ENCODE measurements at regions of chr1 and their contacts with region 1.

Region 1: DNA sequence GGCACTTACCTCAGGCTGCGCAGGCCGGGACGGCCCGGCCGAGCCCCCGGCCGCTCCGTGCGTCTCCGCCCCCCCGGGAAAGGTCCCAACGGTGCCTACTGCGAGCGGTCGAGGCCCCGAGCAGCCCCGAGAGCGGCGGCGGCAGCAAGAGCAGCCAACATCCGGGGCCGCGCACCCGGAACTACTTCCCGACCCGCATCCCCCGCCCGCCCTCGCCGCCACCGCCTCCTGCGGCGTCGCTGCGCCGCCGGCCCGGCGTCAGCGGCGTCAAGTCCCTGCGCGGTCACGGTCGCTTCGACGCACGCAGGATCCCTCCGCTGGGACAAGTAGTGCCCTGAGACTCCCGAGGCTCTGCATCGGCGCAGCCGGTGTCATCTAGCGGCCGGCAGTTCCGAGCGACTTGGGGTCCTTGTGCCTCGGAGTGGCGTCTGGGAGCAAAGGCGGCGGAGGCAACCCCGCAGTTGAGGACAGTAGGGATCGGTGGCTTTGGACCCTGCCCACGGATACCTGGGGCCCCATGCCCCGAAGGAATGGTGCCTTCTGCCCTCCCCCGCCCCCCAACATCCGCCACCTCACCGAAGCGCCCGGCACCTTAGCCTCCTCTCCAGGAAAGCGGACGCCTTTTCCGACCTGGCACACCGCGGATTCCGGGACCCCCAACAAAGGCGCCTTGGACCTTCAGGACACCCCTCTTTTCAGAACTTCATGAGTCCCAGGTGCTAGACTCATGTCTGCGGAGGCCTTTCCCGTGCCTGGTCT is at the start of gene FOXJ3:
- DNase-seq: peak; percentile 84 to 94
- H3K4me3 ChIP-seq: peak within 1 kb of the TSS; percentile 85
- H3K27ac ChIP-seq: peak within 1 kb of the TSS; percentile 84
- H3K4me1 ChIP-seq: peaks cover 58% of the 10 kb centered on the region
- H3K27me3 ChIP-seq: no peaks in the 10 kb centered on the region
- CTCF ChIP-seq: no peak
- total RNA-seq, gene FOXJ3: 46.7 and 60.4 TPM in 2 replicates

Region 2: GRCh38 chr1:42209621-42210251 is 125.5 kb before region 1 on chr1:
- CTCF ChIA-PET with region 1: no interaction called
- POLR2A ChIA-PET with region 1: no interaction called
- intact Hi-C with region 1: loop called (anchors 2 kb)
- DNase-seq: peak; percentile 64 to 68
- H3K4me3 ChIP-seq: no peak overlapping the region
- H3K27ac ChIP-seq: peak overlapping the region; percentile 66
- H3K4me1 ChIP-seq: peaks cover 99% of the 10 kb centered on the region
- H3K27me3 ChIP-seq: no peaks in the 10 kb centered on the region
- CTCF ChIP-seq: no peak

Region 3: DNA sequence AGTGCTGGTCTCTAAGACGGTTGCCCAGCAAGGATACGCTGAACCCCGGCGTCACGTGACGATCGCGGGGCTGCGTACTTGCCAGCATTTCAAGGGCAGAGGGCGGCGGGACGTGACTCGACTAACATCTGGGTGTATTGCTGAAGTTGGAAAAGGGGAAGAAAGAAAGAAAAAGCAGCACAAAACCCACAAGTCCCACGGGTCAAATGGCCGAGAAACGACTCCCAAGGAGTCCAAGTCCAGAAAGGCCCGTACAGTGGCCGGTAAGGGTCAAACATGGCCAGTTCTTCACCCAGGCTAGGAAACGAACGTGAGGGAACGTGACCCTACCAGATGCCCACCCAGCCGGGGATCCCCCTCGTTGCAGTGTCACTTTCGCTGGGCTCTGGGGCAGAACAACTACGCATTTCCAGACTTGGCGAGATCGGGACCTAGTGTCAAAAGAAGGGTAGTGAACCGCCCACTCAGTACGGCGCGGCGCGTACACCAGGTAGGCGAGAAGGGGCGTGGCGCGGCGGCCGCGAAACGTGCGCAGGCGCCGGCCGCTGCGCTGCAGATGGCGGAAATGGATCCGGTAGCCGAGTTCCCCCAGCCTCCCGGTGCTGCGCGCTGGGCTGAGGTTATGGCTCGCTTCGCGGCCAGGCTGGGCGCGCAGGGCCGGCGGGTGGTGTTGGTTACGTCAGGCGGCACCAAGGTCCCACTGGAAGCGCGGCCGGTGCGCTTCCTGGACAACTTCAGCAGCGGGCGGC is 121.0 kb after region 1 on chr1 and contains the starts of genes PPCS and ZMYND12:
- CTCF ChIA-PET with region 1: interaction called, 14 read pairs
- POLR2A ChIA-PET with region 1: no interaction called
- intact Hi-C with region 1: loop called (anchors 1 kb)
- DNase-seq: peak; percentile 73 to 90
- H3K4me3 ChIP-seq: peak within 1 kb of the TSS; percentile 91
- H3K27ac ChIP-seq: peak within 1 kb of the TSS; percentile 70
- H3K4me1 ChIP-seq: peaks cover 26% of the 10 kb centered on the region
- H3K27me3 ChIP-seq: no peaks in the 10 kb centered on the region
- CTCF ChIP-seq: no peak
- total RNA-seq, gene PPCS: 73.0 and 76.0 TPM in 2 replicates
- total RNA-seq, gene ZMYND12: 1.7 and 3.7 TPM in 2 replicates

Region 4: GRCh38 chr1:42504535-42505128 is 169.4 kb after region 1 on chr1:
- CTCF ChIA-PET with region 1: no interaction called
- POLR2A ChIA-PET with region 1: interaction called, 16 read pairs
- intact Hi-C with region 1: no loop called
- DNase-seq: no peak
- H3K4me3 ChIP-seq: no peak overlapping the region
- H3K27ac ChIP-seq: no peak overlapping the region
- H3K4me1 ChIP-seq: no peaks in the 10 kb centered on the region
- H3K27me3 ChIP-seq: no peaks in the 10 kb centered on the region
- CTCF ChIP-seq: 0 out of 2 replicates have a peak, but pooled peaks have one; percentile 12

Region 5: DNA sequence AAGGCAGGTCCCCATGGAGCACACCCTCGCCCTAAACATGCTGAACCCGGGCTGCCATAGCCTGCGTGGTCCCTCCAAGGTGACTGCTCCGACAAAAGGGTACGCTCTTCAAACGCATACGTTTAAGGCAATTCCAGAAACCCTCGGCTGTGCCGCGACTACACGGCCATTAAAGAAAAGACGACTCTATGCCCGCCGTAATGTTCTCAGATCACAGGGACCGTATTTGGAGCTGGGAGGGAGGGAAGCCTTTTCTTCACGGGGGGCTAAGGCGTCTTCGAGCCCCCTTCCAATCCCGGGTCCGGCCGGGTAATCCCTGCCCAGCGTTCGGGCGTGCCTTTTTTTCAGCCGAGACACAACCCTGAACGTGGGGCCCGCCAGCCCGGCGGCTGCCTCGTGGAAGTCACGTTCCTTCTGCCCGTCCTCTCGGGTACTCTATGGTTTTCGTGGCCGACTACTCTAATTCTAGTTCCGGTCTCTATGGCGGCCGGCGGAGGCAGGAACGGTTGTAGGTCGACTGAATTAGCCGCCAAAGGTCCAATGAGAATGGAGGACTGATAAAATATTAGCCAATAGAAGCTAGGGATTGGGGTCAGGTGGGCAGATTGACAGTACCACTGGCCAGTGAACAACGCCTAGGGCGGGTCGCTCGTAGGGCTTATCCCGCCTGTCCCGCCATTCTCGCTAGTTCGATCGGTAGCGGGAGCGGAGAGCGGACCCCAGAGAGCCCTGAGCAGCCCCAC is 346.7 kb after region 1 on chr1 and contains the start of gene YBX1:
- CTCF ChIA-PET with region 1: no interaction called
- POLR2A ChIA-PET with region 1: no interaction called
- intact Hi-C with region 1: loop called (anchors 10 kb)
- DNase-seq: peak; percentile 96 to 98
- H3K4me3 ChIP-seq: peak within 1 kb of the TSS; percentile 93
- H3K27ac ChIP-seq: peak within 1 kb of the TSS; percentile 79
- H3K4me1 ChIP-seq: peaks cover 41% of the 10 kb centered on the region
- H3K27me3 ChIP-seq: no peaks in the 10 kb centered on the region
- CTCF ChIP-seq: no peak
- total RNA-seq, gene YBX1: 656 and 1,130 TPM in 2 replicates

Measured in PC-9 (cell line).